T-cell (primary cell): ENCODE measurements at regions of chr4 and their contacts with region 1.

Region 1: DNA sequence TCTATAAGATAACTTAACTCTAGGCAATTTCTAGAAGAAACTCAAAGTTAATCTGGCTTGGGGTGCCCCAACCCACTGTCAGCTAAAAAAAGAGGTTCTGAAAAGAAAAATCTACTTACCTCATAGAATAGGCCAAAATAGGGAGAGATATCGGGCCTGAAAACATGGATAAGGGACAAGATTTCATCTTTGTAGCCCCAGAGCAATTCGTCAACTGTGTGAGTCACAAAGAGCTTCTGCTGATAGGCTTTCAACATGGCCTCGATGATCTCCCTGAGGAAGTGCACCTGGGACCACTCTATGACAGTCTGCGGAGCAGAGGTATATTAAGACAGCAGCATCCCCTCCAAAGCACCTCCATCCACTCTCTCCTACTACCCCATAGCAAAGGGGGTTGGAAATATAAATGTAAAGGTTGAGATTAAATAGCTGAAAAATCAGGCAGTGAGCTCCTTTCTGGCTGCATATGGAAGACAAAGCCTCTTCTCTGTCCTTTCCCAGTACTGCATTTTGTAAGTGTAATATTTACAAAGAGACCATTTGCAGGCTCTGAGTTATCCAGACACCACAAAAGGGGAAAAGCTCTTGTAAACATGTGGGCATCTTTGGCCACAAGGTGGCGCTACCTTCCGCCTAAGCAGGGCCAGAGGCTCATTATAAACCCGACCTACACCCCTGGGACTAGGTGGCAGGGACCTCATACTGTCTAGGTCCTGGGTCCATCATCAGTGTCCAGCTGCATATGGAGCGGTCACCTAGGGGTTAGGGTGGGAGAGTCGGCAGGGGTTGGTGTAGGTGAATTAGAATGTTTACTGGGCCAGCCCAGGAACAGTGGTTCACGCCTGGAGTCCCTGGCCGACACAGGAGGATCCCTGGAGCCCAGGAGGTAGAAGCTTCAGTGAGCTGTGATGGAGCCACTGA is 31.5 kb upstream of the NUP54 start:
- DNase-seq: peak; percentile 59 to 90 (median 78)
- ATAC-seq: peak; percentile 77 to 88 (median 80)
- H3K4me3 ChIP-seq: no peak overlapping the region
- H3K4me3 Mint-ChIP-seq: no peak overlapping the region
- H3K27ac ChIP-seq: no peak overlapping the region
- H3K27ac Mint-ChIP-seq: no peak overlapping the region
- H3K4me1 ChIP-seq: peaks cover 0 to 3% of the 10 kb centered on the region in 2 experiments
- H3K4me1 Mint-ChIP-seq: peaks cover 0 to 2% (median 0%) of the 10 kb centered on the region in 3 donors
- H3K27me3 ChIP-seq: no peaks in the 10 kb centered on the region
- H3K27me3 Mint-ChIP-seq: no peaks in the 10 kb centered on the region

Region 2: GRCh38 chr4:76377911-76378310 is 198.3 kb after region 1 on chr4:
- CTCF ChIA-PET with region 1: interaction called, 45 to 151 read pairs
- POLR2A ChIA-PET with region 1: interaction called in 1 of 2 experiments, 4 read pairs
- DNase-seq: peak in 27 of 35 experiments; percentile 8 to 64 (median 35)
- ATAC-seq: no peak
- H3K4me3 ChIP-seq: no peak overlapping the region
- H3K4me3 Mint-ChIP-seq: no peak overlapping the region
- H3K27ac ChIP-seq: no peak overlapping the region
- H3K27ac Mint-ChIP-seq: no peak overlapping the region
- H3K4me1 ChIP-seq: no peaks in the 10 kb centered on the region
- H3K4me1 Mint-ChIP-seq: peaks cover 0 to 7% (median 0%) of the 10 kb centered on the region in 3 donors
- H3K27me3 ChIP-seq: peaks cover 0 to 3% of the 10 kb centered on the region in 2 experiments
- H3K27me3 Mint-ChIP-seq: no peaks in the 10 kb centered on the region

Region 3: GRCh38 chr4:76504613-76505465 is 325.2 kb after region 1 on chr4:
- CTCF ChIA-PET with region 1: interaction called, 38 read pairs
- POLR2A ChIA-PET with region 1: no interaction called
- DNase-seq: peak in 3 of 35 experiments; percentile 3 to 57 (median 4)
- ATAC-seq: no peak
- H3K4me3 ChIP-seq: no peak overlapping the region
- H3K4me3 Mint-ChIP-seq: no peak overlapping the region
- H3K27ac ChIP-seq: no peak overlapping the region
- H3K27ac Mint-ChIP-seq: no peak overlapping the region
- H3K4me1 ChIP-seq: no peaks in the 10 kb centered on the region
- H3K4me1 Mint-ChIP-seq: no peaks in the 10 kb centered on the region
- H3K27me3 ChIP-seq: no peaks in the 10 kb centered on the region
- H3K27me3 Mint-ChIP-seq: peaks cover 9 to 14% of the 10 kb centered on the region in 2 donors